Tibial artery (tissue), 4 donors: ENCODE measurements at regions of chr17 and their contacts with region 1.

Region 1: DNA sequence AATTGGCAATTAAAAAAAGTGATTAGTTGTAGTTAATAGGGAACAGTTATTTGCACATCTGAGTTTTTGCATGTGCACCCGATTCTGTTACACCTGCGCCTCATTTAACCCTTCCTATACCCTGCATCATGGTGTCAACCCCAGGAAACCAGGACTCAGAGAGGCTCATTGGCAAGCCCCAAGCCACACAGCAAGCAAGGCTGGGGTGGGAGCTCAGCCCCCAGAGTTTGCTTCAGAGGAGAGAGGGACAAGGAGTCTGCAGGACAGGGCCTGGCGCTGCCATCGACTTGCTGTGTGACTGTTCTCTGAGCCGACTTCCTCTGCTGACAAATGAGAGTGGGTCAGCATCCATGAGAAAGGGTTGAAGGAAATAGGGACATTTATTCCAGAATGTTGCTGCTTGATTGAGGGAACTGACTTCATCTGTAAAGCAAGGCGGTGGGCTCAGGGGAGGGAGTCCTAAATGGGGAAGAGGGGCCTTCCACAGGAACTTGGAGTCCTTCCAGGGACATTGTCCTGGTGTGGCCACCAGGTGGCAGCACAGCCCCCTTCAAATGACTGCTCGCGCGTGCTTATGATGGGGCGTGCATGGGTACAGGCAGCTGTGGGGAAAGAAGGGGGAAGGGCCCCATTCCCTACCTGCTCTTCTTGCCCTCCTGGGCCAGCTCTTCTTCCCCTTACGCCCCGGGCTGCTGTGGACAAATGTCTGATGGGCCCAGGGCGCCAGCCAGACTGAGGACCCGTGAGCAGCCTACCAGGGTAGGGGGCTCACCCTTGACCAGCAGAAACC is 51.6 kb downstream of the NT5M start:
- DNase-seq: peak; percentile 58 to 75
- H3K4me3 ChIP-seq: no peak overlapping the region
- H3K27ac ChIP-seq: no peak overlapping the region
- H3K4me1 ChIP-seq: peaks cover 0 to 13% (median 5%) of the 10 kb centered on the region in 4 donors
- H3K27me3 ChIP-seq: peaks cover 0 to 6% of the 10 kb centered on the region in 2 donors
- CTCF ChIP-seq: peak; percentile 89 to 92

Region 2: DNA sequence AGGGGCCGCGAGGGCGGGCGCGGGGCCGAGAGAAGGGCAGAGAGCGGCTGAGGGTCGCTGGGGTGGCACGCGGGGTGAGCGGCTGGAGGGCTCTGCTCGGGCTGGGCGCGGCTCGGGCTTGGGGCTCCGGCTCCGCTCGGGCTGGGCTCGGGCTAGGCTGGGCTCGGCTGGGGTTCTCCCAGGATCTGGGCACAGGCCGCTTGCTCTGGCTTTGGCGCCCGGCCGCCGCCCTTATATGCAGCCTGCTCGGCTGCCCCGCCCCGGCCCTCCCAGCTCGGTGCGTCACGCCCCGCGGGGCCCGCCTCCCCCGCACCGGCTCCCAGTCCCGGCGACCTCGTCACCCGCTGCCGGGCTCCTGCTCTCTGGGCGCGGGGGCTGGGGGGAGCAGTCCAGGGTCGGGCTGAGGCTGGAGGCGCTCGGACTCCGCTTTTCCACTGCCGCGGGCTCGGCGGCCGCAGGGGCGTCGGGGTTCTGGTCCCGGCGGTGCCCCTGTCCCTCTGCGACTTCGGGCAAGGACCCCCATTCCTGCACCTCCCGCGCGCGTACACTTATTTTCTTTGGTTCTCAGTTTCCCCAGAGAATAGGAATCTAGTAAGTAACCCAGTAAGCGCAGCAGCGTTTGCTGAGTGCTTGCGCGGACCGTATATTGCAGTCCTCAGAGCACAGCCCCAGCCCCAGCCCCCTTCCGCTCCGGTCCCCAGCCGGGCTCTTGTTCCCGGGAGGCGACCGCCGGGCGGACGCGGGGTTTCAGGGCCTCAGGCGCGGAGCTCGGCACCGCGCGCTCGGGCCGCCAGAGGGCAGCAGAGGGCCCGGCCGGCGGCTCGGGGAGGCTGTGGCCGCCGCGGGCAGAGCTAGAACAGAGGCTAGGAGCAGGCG is 141.7 kb after region 1 on chr17 and contains the start of gene RASD1:
- intact Hi-C with region 1: no loop called
- DNase-seq: peak; percentile 83 to 94
- H3K4me3 ChIP-seq: peak within 1 kb of the TSS; percentile 58 to 80
- H3K27ac ChIP-seq: peak within 1 kb of the TSS; percentile 57 to 76
- H3K4me1 ChIP-seq: peaks cover 0 to 35% (median 19%) of the 10 kb centered on the region in 4 donors
- H3K27me3 ChIP-seq: no peaks in the 10 kb centered on the region
- CTCF ChIP-seq: peak; percentile 93 to 94

Region 3: DNA sequence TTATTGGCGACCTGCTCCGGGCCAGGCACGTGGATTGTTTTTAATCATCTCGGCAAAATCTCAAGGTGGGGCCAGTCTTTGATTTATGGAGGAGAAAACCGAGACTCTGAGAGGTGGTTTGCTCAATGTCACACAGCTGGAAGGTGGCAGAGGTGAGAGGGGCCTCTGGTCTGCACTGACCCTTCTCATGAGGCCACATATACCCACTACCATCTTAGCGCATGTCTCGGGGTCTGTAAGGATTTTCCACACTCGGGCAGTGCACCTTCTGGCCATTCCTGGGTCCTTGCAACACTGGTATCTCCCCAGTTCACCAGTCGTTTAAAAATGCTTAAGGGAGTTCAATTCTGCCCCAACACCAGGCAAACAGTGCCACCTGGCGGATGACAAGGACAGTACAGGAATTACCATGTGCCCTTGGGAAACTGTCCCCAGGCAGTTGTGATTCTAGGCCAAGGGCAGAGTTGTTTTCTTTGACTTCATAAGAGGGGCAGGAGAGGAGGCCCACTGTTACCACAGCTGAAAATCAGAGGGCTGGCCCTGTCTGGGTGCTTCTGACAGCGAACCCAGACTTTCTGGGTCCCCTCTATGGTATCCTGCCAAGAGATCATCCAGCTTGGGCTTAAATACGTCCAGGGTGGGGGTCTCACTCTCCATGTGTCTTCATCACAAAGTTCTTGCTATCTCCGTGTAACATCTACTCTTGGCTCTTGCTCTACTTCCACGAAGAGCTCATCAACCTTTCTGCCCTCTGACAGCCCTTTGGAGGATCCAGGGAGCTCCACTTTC is 287.1 kb after region 1 on chr17:
- intact Hi-C with region 1: loop called (anchors 2 kb)
- DNase-seq: peak; percentile 64 to 84
- H3K4me3 ChIP-seq: no peak overlapping the region
- H3K27ac ChIP-seq: no peak overlapping the region
- H3K4me1 ChIP-seq: no peaks in the 10 kb centered on the region
- H3K27me3 ChIP-seq: peaks cover 0 to 28% of the 10 kb centered on the region in 2 donors
- CTCF ChIP-seq: peak; percentile 87 to 88